ENCODE measurements at regions of chr5 and their contacts with region 1.

Region 1: GRCh38 chr5:83750749-83751148 is 30.1 kb upstream of the HAPLN1 start:
- DNase-seq: no peak
- H3K4me3 ChIP-seq: no peak overlapping the region
- H3K27ac ChIP-seq: no peak overlapping the region
- H3K4me1 ChIP-seq: peaks cover 0 to 3% (median 0%) of the 10 kb centered on the region in 4 donors
- H3K27me3 ChIP-seq: no peaks in the 10 kb centered on the region
- CTCF ChIP-seq: no peak
- EP300 ChIP-seq: no peak
- POLR2A ChIP-seq: no peak

Region 2: DNA sequence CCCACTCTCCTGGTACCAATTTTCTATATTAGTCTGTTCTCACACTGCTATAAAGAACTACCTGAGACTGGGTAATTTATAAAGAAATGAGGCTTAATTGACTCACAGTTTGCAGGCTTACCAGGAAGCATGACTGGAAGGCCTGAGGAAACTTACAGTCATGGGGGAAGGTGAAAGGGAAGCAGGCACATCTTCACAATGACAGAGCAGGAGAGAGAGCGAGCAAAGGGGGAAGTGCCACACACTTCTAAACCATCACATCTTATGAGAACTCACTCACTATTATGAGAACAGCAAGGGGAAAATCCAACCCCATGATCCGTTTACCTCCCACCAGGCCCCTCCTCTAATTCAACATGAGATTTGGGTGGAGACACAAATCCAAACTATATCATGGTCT is 1706.7 kb before region 1 on chr5:
- in situ Hi-C with region 1: no loop called
- intact Hi-C with region 1: loop called (anchors 5 kb)
- DNase-seq: no peak
- H3K4me3 ChIP-seq: no peak overlapping the region
- H3K27ac ChIP-seq: no peak overlapping the region
- H3K4me1 ChIP-seq: peaks cover 0 to 6% (median 3%) of the 10 kb centered on the region in 4 donors
- H3K27me3 ChIP-seq: no peaks in the 10 kb centered on the region
- CTCF ChIP-seq: no peak
- EP300 ChIP-seq: no peak
- POLR2A ChIP-seq: no peak

Region 3: DNA sequence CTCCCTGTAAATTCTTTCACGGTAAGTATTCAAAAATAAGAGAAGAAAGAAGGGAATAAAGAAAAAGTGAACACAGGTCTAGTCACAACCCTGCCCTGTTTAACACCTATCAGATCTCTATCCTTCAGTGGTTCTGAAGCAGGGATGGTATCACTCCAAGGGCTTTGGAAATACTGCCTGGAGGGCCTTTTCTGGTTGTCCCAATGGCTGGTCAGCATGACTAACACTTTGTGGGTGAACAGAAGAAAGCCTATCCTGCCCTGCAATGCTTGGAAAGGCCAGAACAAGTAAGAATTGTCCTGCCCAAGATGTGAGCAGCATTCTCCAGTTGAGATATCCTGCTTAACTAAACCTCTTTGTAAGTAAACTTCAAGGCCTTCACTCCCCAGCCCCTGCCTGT is 798.4 kb before region 1 on chr5:
- in situ Hi-C with region 1: no loop called
- intact Hi-C with region 1: no loop called
- DNase-seq: no peak
- H3K4me3 ChIP-seq: no peak overlapping the region
- H3K27ac ChIP-seq: no peak overlapping the region
- H3K4me1 ChIP-seq: no peaks in the 10 kb centered on the region
- H3K27me3 ChIP-seq: no peaks in the 10 kb centered on the region
- CTCF ChIP-seq: no peak
- EP300 ChIP-seq: no peak
- POLR2A ChIP-seq: no peak

Region 4: GRCh38 chr5:83688281-83688680 is 62.5 kb before region 1 on chr5:
- in situ Hi-C with region 1: no loop called
- intact Hi-C with region 1: no loop called
- DNase-seq: no peak
- H3K4me3 ChIP-seq: no peak overlapping the region
- H3K27ac ChIP-seq: no peak overlapping the region
- H3K4me1 ChIP-seq: no peaks in the 10 kb centered on the region
- H3K27me3 ChIP-seq: no peaks in the 10 kb centered on the region
- CTCF ChIP-seq: no peak
- EP300 ChIP-seq: no peak
- POLR2A ChIP-seq: no peak

Region 5: GRCh38 chr5:83712001-83712601 is 38.6 kb before region 1 on chr5:
- in situ Hi-C with region 1: no loop called
- intact Hi-C with region 1: no loop called
- DNase-seq: peak; percentile 27
- H3K4me3 ChIP-seq: no peak overlapping the region
- H3K27ac ChIP-seq: no peak overlapping the region
- H3K4me1 ChIP-seq: no peaks in the 10 kb centered on the region
- H3K27me3 ChIP-seq: no peaks in the 10 kb centered on the region
- CTCF ChIP-seq: peak; percentile 64 to 79 (median 78)
- EP300 ChIP-seq: no peak
- POLR2A ChIP-seq: no peak

Region 6: DNA sequence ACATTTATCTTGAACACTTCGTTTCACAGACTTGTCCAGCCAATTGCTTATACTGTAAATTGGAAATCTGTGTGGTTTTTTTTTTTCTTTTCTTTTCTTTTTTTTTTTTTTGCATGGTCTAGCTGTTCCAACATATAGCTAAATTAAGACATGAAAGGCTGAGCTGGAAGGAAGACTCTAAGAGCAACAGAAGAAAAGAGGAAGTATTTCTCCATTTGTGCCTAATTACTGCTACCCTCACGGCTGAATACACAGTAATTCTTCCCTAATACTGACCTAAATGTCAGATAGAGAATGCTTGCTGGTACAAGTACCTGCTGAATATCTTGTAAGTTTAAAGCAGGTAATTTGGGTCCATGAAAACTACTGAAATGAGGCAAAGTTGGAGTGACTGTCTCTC is 19.1 kb before region 1 on chr5:
- in situ Hi-C with region 1: no loop called
- intact Hi-C with region 1: no loop called
- DNase-seq: no peak
- H3K4me3 ChIP-seq: no peak overlapping the region
- H3K27ac ChIP-seq: no peak overlapping the region
- H3K4me1 ChIP-seq: no peaks in the 10 kb centered on the region
- H3K27me3 ChIP-seq: no peaks in the 10 kb centered on the region
- CTCF ChIP-seq: no peak
- EP300 ChIP-seq: no peak
- POLR2A ChIP-seq: no peak

Measured in transverse colon (tissue), 4 donors.